CD4-positive, alpha-beta T cell (primary cell): ENCODE measurements at regions of chr1 and their contacts with region 1.

Region 1: DNA sequence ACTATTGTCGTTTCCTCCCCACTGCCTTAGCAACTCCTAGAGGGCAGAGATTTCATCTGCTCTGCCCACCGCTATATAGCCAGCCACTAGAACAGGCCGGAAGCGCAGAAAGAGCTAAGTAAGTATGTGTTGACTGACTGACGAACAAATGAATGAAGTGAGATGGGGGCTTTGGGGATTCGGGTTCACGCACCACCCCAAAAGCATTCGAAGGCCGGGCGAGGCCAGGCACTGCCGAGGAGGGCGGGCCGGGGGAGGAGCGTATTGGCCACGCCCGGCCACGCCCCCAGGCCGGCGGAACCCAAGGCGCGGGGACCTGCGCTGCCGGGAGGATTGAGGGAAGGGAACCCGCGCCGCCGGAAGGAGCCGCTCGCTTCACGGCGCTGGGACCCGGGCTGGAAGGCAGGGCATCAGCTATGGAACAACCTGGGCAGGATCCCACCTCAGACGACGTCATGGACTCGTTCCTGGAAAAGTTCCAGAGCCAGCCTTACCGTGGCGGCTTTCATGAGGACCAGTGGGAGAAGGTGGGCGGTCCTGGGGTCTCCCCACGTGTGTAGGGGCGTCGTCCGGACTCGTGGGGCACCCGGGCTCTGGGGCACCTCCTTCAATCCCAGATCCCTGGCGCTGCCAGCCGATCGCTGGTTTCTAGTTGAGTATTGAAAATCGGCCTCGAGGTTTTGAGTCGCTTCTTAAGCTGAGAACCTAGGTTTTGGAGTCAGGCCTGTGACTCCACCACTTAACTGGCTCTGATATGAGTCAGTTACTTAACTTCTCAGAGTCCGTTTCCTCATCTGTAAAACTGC is at the start of gene TTC4:
- DNase-seq: peak; percentile 67 to 93 (median 81)
- ATAC-seq: peak; percentile 97
- H3K4me3 ChIP-seq: peak within 1 kb of the TSS; percentile 87
- H3K4me3 Mint-ChIP-seq: peak within 1 kb of the TSS; percentile 93
- H3K27ac ChIP-seq: peak within 1 kb of the TSS; percentile 43 to 71
- H3K27ac Mint-ChIP-seq: peak within 1 kb of the TSS; percentile 74
- H3K4me1 ChIP-seq: peaks cover 18% of the 10 kb centered on the region
- H3K4me1 Mint-ChIP-seq: peaks cover 40% of the 10 kb centered on the region
- H3K27me3 ChIP-seq: no peaks in the 10 kb centered on the region
- H3K27me3 Mint-ChIP-seq: no peaks in the 10 kb centered on the region
- CTCF ChIP-seq: no peak
- total RNA-seq, gene TTC4: 7.3 to 7.6 TPM

Region 2: GRCh38 chr1:53326088-53326597 is 1389.6 kb before region 1 on chr1:
- CTCF ChIA-PET with region 1: no interaction called
- POLR2A ChIA-PET with region 1: no interaction called
- intact Hi-C with region 1: loop called in 1 of 2 experiments (anchors 10 kb)
- DNase-seq: peak; percentile 69 to 94 (median 87)
- ATAC-seq: peak; percentile 78
- H3K4me3 ChIP-seq: peak overlapping the region; percentile 86
- H3K4me3 Mint-ChIP-seq: peak overlapping the region; percentile 83
- H3K27ac ChIP-seq: peak overlapping the region in 1 of 2 donors; percentile 65
- H3K27ac Mint-ChIP-seq: peak overlapping the region; percentile 79
- H3K4me1 ChIP-seq: peaks cover 26% of the 10 kb centered on the region
- H3K4me1 Mint-ChIP-seq: peaks cover 17% of the 10 kb centered on the region
- H3K27me3 ChIP-seq: no peaks in the 10 kb centered on the region
- H3K27me3 Mint-ChIP-seq: no peaks in the 10 kb centered on the region
- CTCF ChIP-seq: no peak

Region 3: GRCh38 chr1:54199765-54200518 is 515.8 kb before region 1 on chr1 and contains the starts of genes CYB5RL and MRPL37:
- CTCF ChIA-PET with region 1: no interaction called
- POLR2A ChIA-PET with region 1: no interaction called
- intact Hi-C with region 1: loop called in 1 of 2 experiments (anchors 5 kb)
- DNase-seq: peak; percentile 78 to 96 (median 84)
- ATAC-seq: peak; percentile 98
- H3K4me3 ChIP-seq: peak within 1 kb of the TSS; percentile 96
- H3K4me3 Mint-ChIP-seq: peak within 1 kb of the TSS; percentile 92
- H3K27ac ChIP-seq: peak within 1 kb of the TSS; percentile 22 to 37
- H3K27ac Mint-ChIP-seq: peak within 1 kb of the TSS; percentile 87
- H3K4me1 ChIP-seq: peaks cover 25% of the 10 kb centered on the region
- H3K4me1 Mint-ChIP-seq: peaks cover 34% of the 10 kb centered on the region
- H3K27me3 ChIP-seq: no peaks in the 10 kb centered on the region
- H3K27me3 Mint-ChIP-seq: no peaks in the 10 kb centered on the region
- CTCF ChIP-seq: no peak
- total RNA-seq, gene CYB5RL: 2.0 to 2.1 TPM
- total RNA-seq, gene MRPL37: 24.0 to 24.4 TPM

Region 4: DNA sequence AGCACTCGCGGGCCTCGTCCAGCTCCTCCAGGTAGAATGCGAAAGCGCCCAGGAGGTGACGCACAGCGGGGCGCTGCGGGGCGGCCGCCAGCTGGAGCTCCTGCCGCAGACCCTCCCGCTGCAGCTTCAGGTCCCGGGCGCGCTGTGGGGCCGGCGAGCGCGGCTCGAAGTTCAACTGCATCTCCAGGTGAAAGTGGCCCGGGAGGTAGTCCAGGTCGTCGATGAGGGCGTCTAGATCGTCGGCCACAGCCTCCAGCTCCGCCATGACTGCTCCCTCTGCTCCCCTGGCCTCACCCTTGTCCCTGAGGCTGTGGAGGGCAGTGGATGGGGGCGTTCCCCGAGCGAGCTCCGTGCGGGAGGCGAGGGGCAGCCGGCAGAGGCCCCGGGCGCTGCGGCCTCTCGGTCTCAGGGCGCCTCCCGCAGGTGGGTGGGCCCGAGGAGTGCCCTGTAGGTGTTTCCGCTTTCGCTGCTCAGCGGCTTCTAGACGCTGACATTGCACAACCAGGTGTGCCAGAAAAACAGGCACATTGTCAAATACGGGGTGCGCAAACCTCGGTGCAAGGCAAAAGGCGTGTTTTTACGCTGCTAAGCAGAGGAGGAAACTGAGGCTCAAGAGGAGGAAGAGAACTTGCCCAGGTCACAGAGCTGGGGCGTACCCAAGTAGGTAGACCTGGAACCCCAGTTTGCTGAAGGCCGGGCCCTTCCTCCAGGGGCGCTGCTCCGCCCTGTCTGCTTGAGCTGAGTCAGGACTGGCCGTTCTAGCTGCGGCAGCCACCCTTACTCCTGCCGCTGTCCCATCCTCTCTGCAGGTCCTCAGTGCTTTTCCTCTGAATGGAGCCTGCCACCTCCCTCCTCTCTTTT is 85.4 kb after region 1 on chr1 and contains the start of gene TTC22:
- CTCF ChIA-PET with region 1: interaction called, 5 read pairs
- POLR2A ChIA-PET with region 1: interaction called, 16 read pairs
- intact Hi-C with region 1: loop called in 1 of 2 experiments (anchors 2 kb)
- DNase-seq: peak; percentile 43 to 83 (median 68)
- ATAC-seq: peak; percentile 87
- H3K4me3 ChIP-seq: peak within 1 kb of the TSS; percentile 82
- H3K4me3 Mint-ChIP-seq: peak within 1 kb of the TSS; percentile 98
- H3K27ac ChIP-seq: peak within 1 kb of the TSS; percentile 33 to 57
- H3K27ac Mint-ChIP-seq: peak within 1 kb of the TSS; percentile 94
- H3K4me1 ChIP-seq: peaks cover 58% of the 10 kb centered on the region
- H3K4me1 Mint-ChIP-seq: peaks cover 63% of the 10 kb centered on the region
- H3K27me3 ChIP-seq: no peaks in the 10 kb centered on the region
- H3K27me3 Mint-ChIP-seq: no peaks in the 10 kb centered on the region
- CTCF ChIP-seq: peak; percentile 84
- total RNA-seq, gene TTC22: 4.4 to 4.5 TPM